ENCODE measurements at regions of chr19 and their contacts with region 1.

Region 1: GRCh38 chr19:7366701-7367420 is 18.1 kb downstream of the ARHGEF18 start:
- DNase-seq: no peak
- ATAC-seq: peak; percentile 84
- H3K4me3 Mint-ChIP-seq: no peak overlapping the region
- H3K27ac Mint-ChIP-seq: peak overlapping the region; percentile 80
- H3K4me1 Mint-ChIP-seq: peaks cover 26% of the 10 kb centered on the region
- H3K27me3 Mint-ChIP-seq: no peaks in the 10 kb centered on the region
- CTCF ChIP-seq: no peak

Region 2: DNA sequence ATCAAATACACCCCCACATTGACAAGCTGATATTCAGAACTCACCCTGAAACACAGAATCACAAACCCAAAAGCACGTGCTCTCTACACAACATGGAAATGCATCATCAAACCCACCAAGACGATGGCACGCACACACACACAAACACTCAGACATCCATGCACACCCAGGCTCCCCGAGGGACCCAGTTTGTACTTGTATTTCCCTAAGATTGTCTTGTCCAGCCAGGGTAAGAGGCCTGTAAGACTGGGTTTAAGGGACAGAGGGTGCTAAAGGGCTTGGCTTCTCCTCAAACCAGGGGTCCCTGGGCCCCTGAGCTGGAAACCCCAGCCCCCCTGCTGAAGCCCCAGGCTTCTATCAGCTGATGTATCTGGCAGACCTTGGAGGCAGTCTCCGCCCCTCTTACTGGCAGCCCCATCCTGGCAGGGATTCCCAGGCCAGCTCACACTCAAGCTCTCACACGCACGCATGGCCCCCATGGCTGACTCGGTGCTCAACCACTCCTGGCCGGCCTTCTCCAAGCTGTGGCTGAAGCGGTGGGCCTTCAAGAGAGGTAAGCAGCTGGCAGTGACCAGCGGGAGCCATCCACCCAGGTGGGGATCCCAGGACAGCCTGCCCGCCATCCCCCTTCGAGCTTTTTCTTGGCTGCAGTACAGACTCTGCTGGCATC is 11.6 kb before region 1 on chr19:
- CTCF ChIA-PET with region 1: interaction called, 17 read pairs
- POLR2A ChIA-PET with region 1: interaction called, 8 read pairs
- intact Hi-C with region 1: no loop called
- DNase-seq: no peak
- ATAC-seq: no peak
- H3K4me3 Mint-ChIP-seq: peak overlapping the region; percentile 41
- H3K27ac Mint-ChIP-seq: peak overlapping the region; percentile 86
- H3K4me1 Mint-ChIP-seq: peaks cover 82% of the 10 kb centered on the region
- H3K27me3 Mint-ChIP-seq: no peaks in the 10 kb centered on the region
- CTCF ChIP-seq: no peak